ENCODE measurements at regions of chr4 and their contacts with region 1.

Region 1: GRCh38 chr4:17447675-17448298 is 64.1 kb downstream of the QDPR start:
- DNase-seq: peak in 1 of 2 experiments; percentile 59
- H3K4me3 ChIP-seq: no peak overlapping the region
- H3K27ac ChIP-seq: no peak overlapping the region
- H3K4me1 ChIP-seq: no peaks in the 10 kb centered on the region
- H3K27me3 ChIP-seq: no peaks in the 10 kb centered on the region
- CTCF ChIP-seq: peak in 2 of 3 experiments; percentile 71 to 82; a peak in 3 of 4 replicates
- EP300 ChIP-seq: no peak
- POLR2A ChIP-seq: no peak
- RAD21 ChIP-seq: peak; percentile 93 to 95

Region 2: GRCh38 chr4:17317526-17317925 is 130.3 kb before region 1 on chr4:
- CTCF ChIA-PET with region 1: interaction called, 16 read pairs
- POLR2A ChIA-PET with region 1: no interaction called
- DNase-seq: no peak
- H3K4me3 ChIP-seq: no peak overlapping the region
- H3K27ac ChIP-seq: no peak overlapping the region
- H3K4me1 ChIP-seq: no peaks in the 10 kb centered on the region
- H3K27me3 ChIP-seq: no peaks in the 10 kb centered on the region
- CTCF ChIP-seq: no peak
- EP300 ChIP-seq: no peak
- POLR2A ChIP-seq: no peak
- RAD21 ChIP-seq: no peak

Region 3: GRCh38 chr4:17336524-17336961 is 111.2 kb before region 1 on chr4:
- CTCF ChIA-PET with region 1: interaction called, 15 read pairs
- POLR2A ChIA-PET with region 1: no interaction called
- DNase-seq: no peak
- H3K4me3 ChIP-seq: no peak overlapping the region
- H3K27ac ChIP-seq: no peak overlapping the region
- H3K4me1 ChIP-seq: peaks cover 0 to 2% (median 0%) of the 10 kb centered on the region in 4 experiments; a peak in 1 of 7 replicates
- H3K27me3 ChIP-seq: no peaks in the 10 kb centered on the region
- CTCF ChIP-seq: no peak
- EP300 ChIP-seq: no peak
- POLR2A ChIP-seq: no peak
- RAD21 ChIP-seq: no peak

Region 4: GRCh38 chr4:17347445-17347844 is 100.3 kb before region 1 on chr4:
- CTCF ChIA-PET with region 1: interaction called, 69 read pairs
- POLR2A ChIA-PET with region 1: no interaction called
- DNase-seq: peak in 1 of 2 experiments; percentile 55
- H3K4me3 ChIP-seq: no peak overlapping the region
- H3K27ac ChIP-seq: no peak overlapping the region
- H3K4me1 ChIP-seq: no peaks in the 10 kb centered on the region; a peak in 1 of 7 replicates
- H3K27me3 ChIP-seq: no peaks in the 10 kb centered on the region
- CTCF ChIP-seq: peak; percentile 38 to 65 (median 62)
- EP300 ChIP-seq: no peak
- POLR2A ChIP-seq: no peak
- RAD21 ChIP-seq: peak; percentile 76 to 82

Region 5: DNA sequence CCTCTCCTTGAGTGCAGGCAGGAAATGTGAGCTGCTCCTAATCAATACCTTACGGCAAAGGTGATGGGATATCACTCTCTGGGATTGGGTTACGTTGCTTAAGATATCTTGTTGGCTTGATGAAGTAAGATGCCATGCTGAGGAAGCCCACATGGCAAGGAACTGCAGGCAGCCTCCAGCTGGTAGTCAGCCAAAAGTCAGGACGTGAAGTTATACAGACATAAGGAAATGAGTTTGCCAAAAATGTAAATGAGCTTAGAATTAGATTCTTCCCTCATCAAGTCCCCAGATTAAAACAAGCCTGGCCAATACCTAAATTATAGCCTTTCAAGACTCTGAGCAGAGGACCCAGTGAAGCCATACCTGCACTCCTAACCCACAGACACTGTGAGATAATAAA is 90.9 kb before region 1 on chr4:
- CTCF ChIA-PET with region 1: interaction called, 11 read pairs
- POLR2A ChIA-PET with region 1: no interaction called
- DNase-seq: no peak
- H3K4me3 ChIP-seq: no peak overlapping the region
- H3K27ac ChIP-seq: no peak overlapping the region
- H3K4me1 ChIP-seq: no peaks in the 10 kb centered on the region
- H3K27me3 ChIP-seq: no peaks in the 10 kb centered on the region
- CTCF ChIP-seq: no peak
- EP300 ChIP-seq: no peak
- POLR2A ChIP-seq: no peak
- RAD21 ChIP-seq: no peak

Region 6: DNA sequence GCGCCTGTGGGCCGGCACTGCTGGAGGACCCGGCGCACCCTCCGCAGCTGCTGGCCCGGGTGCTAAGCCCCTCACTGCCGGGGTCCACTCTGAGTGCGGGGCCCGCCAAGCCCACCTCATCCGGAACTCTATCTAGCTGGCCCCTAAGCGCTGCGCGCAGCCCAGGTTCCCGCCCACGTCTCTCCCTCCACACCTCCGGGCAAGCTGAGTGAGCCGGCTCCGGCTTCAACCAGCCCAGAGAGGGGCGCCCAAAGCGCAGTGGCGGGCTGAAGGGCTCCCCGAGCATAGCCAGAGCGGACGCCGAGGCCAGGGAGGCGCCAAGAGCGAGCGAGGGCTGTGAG is 11.1 kb before region 1 on chr4:
- CTCF ChIA-PET with region 1: interaction called, 21 read pairs
- POLR2A ChIA-PET with region 1: no interaction called
- DNase-seq: no peak
- H3K4me3 ChIP-seq: no peak overlapping the region
- H3K27ac ChIP-seq: no peak overlapping the region
- H3K4me1 ChIP-seq: no peaks in the 10 kb centered on the region
- H3K27me3 ChIP-seq: no peaks in the 10 kb centered on the region
- CTCF ChIP-seq: no peak
- EP300 ChIP-seq: no peak
- POLR2A ChIP-seq: no peak
- RAD21 ChIP-seq: no peak

Region 7: GRCh38 chr4:17468371-17469221 is 20.8 kb after region 1 on chr4:
- CTCF ChIA-PET with region 1: interaction called, 118 read pairs
- POLR2A ChIA-PET with region 1: no interaction called
- DNase-seq: no peak
- H3K4me3 ChIP-seq: no peak overlapping the region
- H3K27ac ChIP-seq: no peak overlapping the region
- H3K4me1 ChIP-seq: no peaks in the 10 kb centered on the region
- H3K27me3 ChIP-seq: no peaks in the 10 kb centered on the region; a peak in 1 of 7 replicates
- CTCF ChIP-seq: peak; percentile 5 to 38 (median 23); a peak in 3 of 4 replicates
- EP300 ChIP-seq: no peak
- POLR2A ChIP-seq: no peak
- RAD21 ChIP-seq: peak; percentile 55 to 63

Region 8: DNA sequence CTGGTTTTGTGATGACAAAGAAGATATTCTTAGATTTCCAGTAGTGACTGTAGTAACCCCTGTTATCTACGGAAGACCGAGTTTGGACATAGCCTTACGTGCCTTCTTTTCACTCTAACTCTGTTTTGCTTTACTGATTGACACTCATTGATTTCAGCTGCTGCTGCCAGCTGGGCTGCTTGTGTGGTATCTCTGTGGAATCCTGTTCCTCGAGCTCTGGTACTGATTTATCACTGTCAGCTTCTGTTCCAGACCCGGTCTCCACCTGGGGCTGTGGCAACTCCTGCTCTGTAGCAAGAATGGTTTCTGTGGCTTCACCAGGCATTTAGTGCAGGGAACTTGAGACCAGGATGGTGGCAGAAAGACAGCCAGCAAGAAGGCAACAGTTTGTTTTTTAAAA is 104.6 kb after region 1 on chr4:
- CTCF ChIA-PET with region 1: no interaction called
- POLR2A ChIA-PET with region 1: no interaction called
- DNase-seq: no peak
- H3K4me3 ChIP-seq: no peak overlapping the region
- H3K27ac ChIP-seq: no peak overlapping the region
- H3K4me1 ChIP-seq: no peaks in the 10 kb centered on the region
- H3K27me3 ChIP-seq: no peaks in the 10 kb centered on the region
- CTCF ChIP-seq: no peak
- EP300 ChIP-seq: no peak
- POLR2A ChIP-seq: no peak
- RAD21 ChIP-seq: no peak